ENCODE measurements at regions of chr4 and their contacts with region 1.

Region 1: GRCh38 chr4:133775881-133776280 is 425.7 kb downstream of the PABPC4L start:
- DNase-seq: no peak
- ATAC-seq: no peak
- H3K4me3 ChIP-seq: no peak overlapping the region
- H3K27ac ChIP-seq: no peak overlapping the region
- H3K4me1 ChIP-seq: no peaks in the 10 kb centered on the region
- H3K27me3 ChIP-seq: no peaks in the 10 kb centered on the region
- CTCF ChIP-seq: no peak

Region 2: DNA sequence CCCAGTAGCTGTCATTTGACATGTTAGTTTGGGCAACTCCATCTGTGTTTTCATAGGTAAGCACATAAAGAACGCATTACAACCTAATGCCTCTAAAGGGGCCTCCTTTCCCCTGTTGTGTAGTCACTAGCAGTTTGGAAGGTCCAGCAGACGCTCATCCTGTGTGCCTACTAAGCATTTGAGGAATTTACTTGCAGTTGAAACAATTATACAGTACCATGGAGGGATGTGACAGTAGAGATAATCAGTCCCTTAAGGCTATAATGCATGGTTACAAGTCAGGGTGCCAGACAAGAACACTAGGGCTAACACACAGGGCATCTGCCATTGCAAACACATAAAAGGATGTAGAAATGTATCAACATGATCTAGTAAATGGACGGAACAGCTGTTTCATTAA is 488.5 kb before region 1 on chr4:
- CTCF ChIA-PET with region 1: no interaction called
- POLR2A ChIA-PET with region 1: interaction called, 12 read pairs
- in situ Hi-C with region 1: no loop called
- intact Hi-C with region 1: no loop called
- DNase-seq: no peak
- ATAC-seq: no peak
- H3K4me3 ChIP-seq: no peak overlapping the region
- H3K27ac ChIP-seq: no peak overlapping the region
- H3K4me1 ChIP-seq: no peaks in the 10 kb centered on the region
- H3K27me3 ChIP-seq: no peaks in the 10 kb centered on the region
- CTCF ChIP-seq: no peak

Region 3: GRCh38 chr4:133997436-133997835 is 221.6 kb after region 1 on chr4:
- CTCF ChIA-PET with region 1: no interaction called
- POLR2A ChIA-PET with region 1: no interaction called
- in situ Hi-C with region 1: no loop called
- intact Hi-C with region 1: no loop called
- DNase-seq: no peak
- ATAC-seq: no peak
- H3K4me3 ChIP-seq: no peak overlapping the region
- H3K27ac ChIP-seq: no peak overlapping the region
- H3K4me1 ChIP-seq: no peaks in the 10 kb centered on the region
- H3K27me3 ChIP-seq: no peaks in the 10 kb centered on the region
- CTCF ChIP-seq: no peak

Region 4: GRCh38 chr4:134601706-134602105 is 825.8 kb after region 1 on chr4:
- CTCF ChIA-PET with region 1: no interaction called
- POLR2A ChIA-PET with region 1: interaction called, 11 read pairs
- in situ Hi-C with region 1: no loop called
- intact Hi-C with region 1: no loop called
- DNase-seq: no peak
- ATAC-seq: no peak
- H3K4me3 ChIP-seq: no peak overlapping the region
- H3K27ac ChIP-seq: no peak overlapping the region
- H3K4me1 ChIP-seq: no peaks in the 10 kb centered on the region
- H3K27me3 ChIP-seq: no peaks in the 10 kb centered on the region
- CTCF ChIP-seq: no peak

Measured in Panc1 (cell line).